Gastrocnemius medialis (tissue), 4 donors: ENCODE measurements at regions of chr2 and their contacts with region 1.

Region 1: DNA sequence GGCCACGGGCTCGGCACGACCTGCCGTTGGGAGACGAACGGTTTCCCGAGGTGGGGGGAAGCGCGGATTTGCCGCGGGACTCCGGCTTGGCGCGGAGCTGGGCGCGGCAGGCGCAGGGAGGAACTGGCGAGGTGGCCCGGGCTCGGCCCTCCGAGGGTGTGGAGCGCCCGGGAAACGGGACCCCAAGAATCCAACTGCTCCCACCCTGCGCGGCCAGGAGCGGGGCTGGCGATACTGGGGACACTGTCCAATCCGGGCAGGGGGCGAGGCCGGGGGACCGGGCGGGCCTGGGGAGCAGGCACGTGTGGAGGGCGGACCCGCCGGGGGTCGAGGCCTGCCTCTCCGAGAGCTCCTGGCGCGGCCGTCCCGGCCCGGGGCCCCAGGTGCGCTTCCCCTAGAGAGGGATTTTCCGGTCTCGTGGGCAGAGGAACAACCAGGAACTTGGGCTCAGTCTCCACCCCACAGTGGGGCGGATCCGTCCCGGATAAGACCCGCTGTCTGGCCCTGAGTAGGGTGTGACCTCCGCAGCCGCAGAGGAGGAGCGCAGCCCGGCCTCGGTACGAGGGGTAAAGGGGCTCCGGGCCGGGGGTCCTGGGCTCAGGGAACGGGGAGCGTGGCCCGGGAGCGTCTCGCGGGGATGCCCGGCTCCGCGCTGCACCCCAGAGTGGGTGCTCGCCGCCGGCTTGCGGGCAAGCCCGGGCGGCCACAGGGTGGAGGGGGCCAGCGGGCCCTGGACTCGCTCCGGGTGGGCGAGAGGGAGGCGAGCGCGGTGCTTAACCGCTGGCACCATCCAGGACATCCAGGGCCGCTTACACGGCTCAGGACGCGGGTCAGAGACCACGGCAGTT is at the start of gene ANXA4:
- DNase-seq: peak; percentile 82
- ATAC-seq: peak; percentile 84 to 92
- H3K4me3 ChIP-seq: peak within 1 kb of the TSS; percentile 73 to 96 (median 88)
- H3K27ac ChIP-seq: peak within 1 kb of the TSS; percentile 84 to 98 (median 92)
- H3K4me1 ChIP-seq: peaks cover 14 to 19% of the 10 kb centered on the region in 2 donors
- H3K27me3 ChIP-seq: no peaks in the 10 kb centered on the region
- CTCF ChIP-seq: peak in 2 of 5 experiments; percentile 10 to 19
- POLR2A ChIP-seq: peak; percentile 87 to 88
- total RNA-seq, gene ANXA4: 10.7 to 17.0 (median 15.8) TPM

Region 2: DNA sequence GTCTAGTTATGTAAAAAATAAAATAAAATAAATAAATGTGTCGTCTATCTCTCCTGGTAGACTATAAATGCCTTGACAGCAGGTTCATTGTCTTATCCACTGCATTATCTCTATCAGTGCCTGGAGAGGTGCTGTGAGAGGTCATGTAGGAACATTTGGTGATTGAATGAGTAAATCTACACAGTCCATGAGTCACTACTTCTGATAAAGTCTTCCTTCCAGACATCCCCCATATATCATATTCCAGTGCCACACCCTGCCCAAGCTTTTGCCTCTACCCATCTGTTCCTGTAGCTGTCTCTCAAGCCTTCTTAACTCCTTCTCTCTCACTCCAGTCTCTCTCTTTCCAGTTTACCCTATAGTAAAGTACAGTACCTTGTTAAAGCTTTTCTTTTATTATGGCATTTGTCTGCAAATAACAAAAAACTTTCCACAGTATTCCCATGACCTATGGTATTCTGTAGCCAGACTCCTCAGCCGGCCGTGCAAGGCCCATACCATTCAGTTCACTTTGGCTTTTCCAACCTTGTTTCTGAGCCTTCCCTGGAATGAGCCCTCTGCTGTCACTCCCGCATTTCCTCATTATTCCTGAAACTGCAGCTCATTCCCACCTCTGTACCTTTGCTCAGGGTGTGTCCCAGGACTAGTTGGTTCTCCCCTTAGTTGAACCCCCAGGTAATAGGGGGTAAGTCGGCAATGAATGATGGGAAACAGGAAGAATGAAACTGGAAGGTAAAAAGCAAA is 37.6 kb after region 1 on chr2:
- in situ Hi-C with region 1: no loop called
- intact Hi-C with region 1: loop called (anchors 5 kb)
- DNase-seq: peak; percentile 9 to 48
- ATAC-seq: peak; percentile 77 to 78
- H3K4me3 ChIP-seq: no peak overlapping the region
- H3K27ac ChIP-seq: peak overlapping the region; percentile 15 to 66 (median 52)
- H3K4me1 ChIP-seq: peaks cover 32 to 37% of the 10 kb centered on the region in 2 donors
- H3K27me3 ChIP-seq: no peaks in the 10 kb centered on the region
- CTCF ChIP-seq: no peak
- POLR2A ChIP-seq: no peak

Region 3: GRCh38 chr2:70258532-70258874 is 516.7 kb after region 1 on chr2:
- in situ Hi-C with region 1: no loop called
- intact Hi-C with region 1: loop called (anchors 5 kb)
- DNase-seq: peak; percentile 58 to 77
- ATAC-seq: peak; percentile 36 to 37
- H3K4me3 ChIP-seq: peak overlapping the region; percentile 71 to 95 (median 78)
- H3K27ac ChIP-seq: peak overlapping the region; percentile 86 to 94 (median 92)
- H3K4me1 ChIP-seq: peaks cover 49 to 51% of the 10 kb centered on the region in 2 donors
- H3K27me3 ChIP-seq: no peaks in the 10 kb centered on the region
- CTCF ChIP-seq: no peak
- POLR2A ChIP-seq: no peak